Prostate gland (tissue), 2 donors: ENCODE measurements at regions of chr4 and their contacts with region 1.

Region 1: GRCh38 chr4:87838890-87839591 is 6.3 kb downstream of the MEPE start:
- DNase-seq: no peak
- H3K4me3 ChIP-seq: no peak overlapping the region
- H3K27ac ChIP-seq: no peak overlapping the region
- H3K4me1 ChIP-seq: no peaks in the 10 kb centered on the region
- H3K27me3 ChIP-seq: no peaks in the 10 kb centered on the region
- CTCF ChIP-seq: peak; percentile 51 to 66 (median 58)
- POLR2A ChIP-seq: no peak

Region 2: GRCh38 chr4:87375719-87376291 is 463.2 kb before region 1 on chr4:
- intact Hi-C with region 1: loop called (anchors 2 kb)
- DNase-seq: peak; percentile 42
- H3K4me3 ChIP-seq: no peak overlapping the region
- H3K27ac ChIP-seq: no peak overlapping the region
- H3K4me1 ChIP-seq: no peaks in the 10 kb centered on the region
- H3K27me3 ChIP-seq: no peaks in the 10 kb centered on the region
- CTCF ChIP-seq: peak in 3 of 4 experiments; percentile 62 to 76 (median 73)
- POLR2A ChIP-seq: no peak

Region 3: GRCh38 chr4:87657525-87657924 is 181.5 kb before region 1 on chr4:
- intact Hi-C with region 1: no loop called
- DNase-seq: no peak
- H3K4me3 ChIP-seq: no peak overlapping the region
- H3K27ac ChIP-seq: no peak overlapping the region
- H3K4me1 ChIP-seq: peaks cover 2% of the 10 kb centered on the region
- H3K27me3 ChIP-seq: no peaks in the 10 kb centered on the region
- CTCF ChIP-seq: no peak
- POLR2A ChIP-seq: no peak